ENCODE measurements at regions of chr22 and their contacts with region 1.

Region 1: GRCh38 chr22:27517361-27518155 is 284.0 kb downstream of the MN1 start:
- DNase-seq: no peak
- ATAC-seq: no peak
- H3K4me3 ChIP-seq: no peak overlapping the region
- H3K27ac ChIP-seq: no peak overlapping the region
- H3K4me1 ChIP-seq: peaks cover 0 to 21% (median 4%) of the 10 kb centered on the region in 9 donors
- H3K27me3 ChIP-seq: peaks cover 0 to 12% (median 0%) of the 10 kb centered on the region in 7 donors
- CTCF ChIP-seq: no peak

Region 2: GRCh38 chr22:27226666-27227065 is 290.9 kb before region 1 on chr22:
- intact Hi-C with region 1: no loop called
- DNase-seq: no peak
- ATAC-seq: no peak
- H3K4me3 ChIP-seq: no peak overlapping the region
- H3K27ac ChIP-seq: no peak overlapping the region
- H3K4me1 ChIP-seq: peaks cover 0 to 8% (median 0%) of the 10 kb centered on the region in 9 donors
- H3K27me3 ChIP-seq: peaks cover 0 to 40% (median 3%) of the 10 kb centered on the region in 7 donors
- CTCF ChIP-seq: no peak

Region 3: GRCh38 chr22:27554106-27554811 is 36.7 kb after region 1 on chr22:
- intact Hi-C with region 1: no loop called
- DNase-seq: no peak
- ATAC-seq: peak in 3 of 8 donors; percentile 7 to 40 (median 17)
- H3K4me3 ChIP-seq: no peak overlapping the region
- H3K27ac ChIP-seq: no peak overlapping the region
- H3K4me1 ChIP-seq: no peaks in the 10 kb centered on the region
- H3K27me3 ChIP-seq: peaks cover 0 to 11% (median 0%) of the 10 kb centered on the region in 7 donors
- CTCF ChIP-seq: no peak

Region 4: GRCh38 chr22:27573280-27574001 is 55.9 kb after region 1 on chr22:
- intact Hi-C with region 1: loop called in 3 of 10 experiments (anchors 2 to 5 kb)
- DNase-seq: no peak
- ATAC-seq: no peak
- H3K4me3 ChIP-seq: no peak overlapping the region
- H3K27ac ChIP-seq: no peak overlapping the region
- H3K4me1 ChIP-seq: peaks cover 4 to 31% (median 10%) of the 10 kb centered on the region in 9 donors
- H3K27me3 ChIP-seq: peaks cover 0 to 59% (median 42%) of the 10 kb centered on the region in 7 donors
- CTCF ChIP-seq: no peak

Measured in heart right ventricle (tissue), 16 donors.